ENCODE measurements at regions of chr20 and their contacts with region 1.

Region 1: GRCh38 chr20:49928401-49929141 is 7.6 kb upstream of the RNF114 start:
- DNase-seq: no peak
- H3K4me3 ChIP-seq: no peak overlapping the region
- H3K27ac ChIP-seq: no peak overlapping the region
- H3K4me1 ChIP-seq: no peaks in the 10 kb centered on the region
- H3K27me3 ChIP-seq: no peaks in the 10 kb centered on the region
- CTCF ChIP-seq: peak; percentile 58 to 85 (median 74)
- POLR2A ChIP-seq: no peak

Region 2: GRCh38 chr20:49620364-49621240 is 308.0 kb before region 1 on chr20:
- intact Hi-C with region 1: loop called (anchors 10 kb)
- DNase-seq: no peak
- H3K4me3 ChIP-seq: no peak overlapping the region
- H3K27ac ChIP-seq: no peak overlapping the region
- H3K4me1 ChIP-seq: no peaks in the 10 kb centered on the region
- H3K27me3 ChIP-seq: no peaks in the 10 kb centered on the region
- CTCF ChIP-seq: no peak
- POLR2A ChIP-seq: no peak

Region 3: GRCh38 chr20:49713753-49714712 is 214.5 kb before region 1 on chr20 and contains the start of gene B4GALT5:
- intact Hi-C with region 1: no loop called
- DNase-seq: no peak
- H3K4me3 ChIP-seq: peak within 1 kb of the TSS; percentile 95
- H3K27ac ChIP-seq: peak within 1 kb of the TSS; percentile 90
- H3K4me1 ChIP-seq: peaks cover 41% of the 10 kb centered on the region
- H3K27me3 ChIP-seq: no peaks in the 10 kb centered on the region
- CTCF ChIP-seq: no peak
- POLR2A ChIP-seq: peak in 1 of 2 donors; percentile 23
- total RNA-seq, gene B4GALT5: 17.9 TPM

Measured in vagina (tissue), 2 donors.